Panc1 (cell line): ENCODE measurements at regions of chr12 and their contacts with region 1.

Region 1: GRCh38 chr12:13609894-13610679 is 371.3 kb downstream of the GRIN2B start:
- DNase-seq: no peak
- ATAC-seq: no peak
- H3K4me3 ChIP-seq: no peak overlapping the region
- H3K27ac ChIP-seq: no peak overlapping the region
- H3K4me1 ChIP-seq: no peaks in the 10 kb centered on the region
- H3K27me3 ChIP-seq: no peaks in the 10 kb centered on the region
- CTCF ChIP-seq: no peak

Region 2: DNA sequence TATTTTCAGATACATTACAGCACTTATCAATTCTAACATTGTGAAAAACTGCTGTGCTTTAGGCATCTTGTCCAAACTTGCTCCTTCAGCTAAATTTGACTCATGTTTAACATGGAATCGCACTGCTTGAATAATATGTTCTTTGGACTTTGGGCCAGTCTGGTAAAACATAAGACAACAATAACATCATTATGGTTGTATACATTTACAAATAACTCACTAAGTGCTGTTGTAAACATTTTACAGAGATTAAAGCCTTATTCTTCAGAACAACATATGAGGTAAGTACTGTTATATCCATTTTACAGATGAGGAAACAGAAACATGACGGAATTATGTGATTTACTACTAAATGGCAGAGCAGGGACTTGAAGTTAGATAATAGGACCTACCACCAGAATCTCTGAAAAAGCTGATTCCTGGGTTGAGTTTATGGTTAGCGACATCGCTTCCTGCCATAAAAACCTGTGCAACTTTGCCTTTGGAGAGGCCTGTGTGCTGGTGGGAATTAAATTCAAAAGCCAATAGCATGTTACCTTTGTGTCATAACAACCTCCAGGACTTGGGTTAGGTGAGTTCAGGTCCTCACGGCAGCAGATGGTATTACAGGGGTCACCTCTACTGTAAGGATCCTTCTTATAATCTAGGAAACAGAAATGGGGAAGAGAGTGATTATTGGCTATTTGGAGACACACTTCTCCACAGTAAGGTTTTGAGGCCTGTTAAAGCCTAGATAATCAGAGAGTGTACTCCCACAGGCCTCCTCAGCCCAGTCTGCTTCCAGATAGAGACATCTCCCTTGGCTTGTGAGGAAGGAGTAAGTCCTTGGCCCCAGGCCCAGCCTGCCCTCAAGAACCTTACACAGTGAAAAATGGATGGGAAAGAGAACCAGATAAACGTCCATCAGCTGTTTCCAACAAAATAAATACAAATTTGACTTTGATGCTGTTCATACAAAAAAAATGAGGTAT is 895.8 kb after region 1 on chr12:
- CTCF ChIA-PET with region 1: no interaction called
- POLR2A ChIA-PET with region 1: interaction called, 14 read pairs
- in situ Hi-C with region 1: no loop called
- intact Hi-C with region 1: no loop called
- DNase-seq: no peak
- ATAC-seq: no peak
- H3K4me3 ChIP-seq: no peak overlapping the region
- H3K27ac ChIP-seq: no peak overlapping the region
- H3K4me1 ChIP-seq: no peaks in the 10 kb centered on the region
- H3K27me3 ChIP-seq: no peaks in the 10 kb centered on the region
- CTCF ChIP-seq: no peak